ENCODE measurements at regions of chrX and their contacts with region 1.

Region 1: DNA sequence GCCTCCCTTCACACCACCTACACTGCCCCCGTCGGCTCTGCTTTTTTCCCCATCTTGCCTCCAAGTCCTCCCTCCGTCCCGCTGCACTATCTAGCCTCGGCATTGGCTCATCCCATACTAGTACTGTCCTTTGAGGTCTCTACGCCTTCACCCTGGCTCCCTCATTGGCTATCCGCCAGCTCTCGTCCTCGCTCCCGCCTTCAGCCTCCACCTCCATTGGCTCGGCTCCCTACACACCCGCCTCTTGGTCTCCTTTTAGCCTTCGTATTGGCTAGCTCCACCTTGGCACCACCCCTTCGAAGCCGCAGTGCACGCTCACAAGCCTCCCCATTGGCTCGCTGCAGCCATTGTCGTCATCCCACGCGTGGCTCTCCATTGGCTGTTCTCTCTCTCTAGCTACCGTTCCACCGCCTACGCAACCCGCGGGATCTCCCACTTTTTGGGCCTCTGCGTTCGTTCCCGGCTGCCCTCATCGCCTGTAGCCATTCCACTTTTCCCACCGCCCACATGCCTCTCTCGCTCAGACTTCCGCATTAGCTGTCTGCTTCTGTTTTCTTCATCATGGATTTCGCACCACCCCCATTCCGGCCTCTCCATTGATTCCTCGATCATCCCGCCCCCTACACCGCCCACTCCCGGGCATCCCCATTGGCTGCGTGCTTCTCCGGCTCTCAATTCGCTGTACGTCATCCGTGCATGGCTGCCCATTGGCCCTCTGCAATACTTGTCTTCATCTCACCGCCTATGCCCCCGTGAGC is 404 bp upstream of the PPP1R3F start:
- DNase-seq: peak; percentile 72 to 97 (median 94)
- ATAC-seq: peak; percentile 89
- H3K4me3 ChIP-seq: peak overlapping the region; percentile 96
- H3K4me3 Mint-ChIP-seq: peak overlapping the region; percentile 91 to 100 (median 96)
- H3K27ac ChIP-seq: peak overlapping the region; percentile 99
- H3K27ac Mint-ChIP-seq: peak overlapping the region; percentile 99 to 100 (median 99)
- H3K4me1 ChIP-seq: peaks cover 30 to 34% of the 10 kb centered on the region in 2 donors
- H3K4me1 Mint-ChIP-seq: peaks cover 17 to 51% (median 42%) of the 10 kb centered on the region in 7 donors
- H3K27me3 ChIP-seq: no peaks in the 10 kb centered on the region
- H3K27me3 Mint-ChIP-seq: no peaks in the 10 kb centered on the region

Region 2: DNA sequence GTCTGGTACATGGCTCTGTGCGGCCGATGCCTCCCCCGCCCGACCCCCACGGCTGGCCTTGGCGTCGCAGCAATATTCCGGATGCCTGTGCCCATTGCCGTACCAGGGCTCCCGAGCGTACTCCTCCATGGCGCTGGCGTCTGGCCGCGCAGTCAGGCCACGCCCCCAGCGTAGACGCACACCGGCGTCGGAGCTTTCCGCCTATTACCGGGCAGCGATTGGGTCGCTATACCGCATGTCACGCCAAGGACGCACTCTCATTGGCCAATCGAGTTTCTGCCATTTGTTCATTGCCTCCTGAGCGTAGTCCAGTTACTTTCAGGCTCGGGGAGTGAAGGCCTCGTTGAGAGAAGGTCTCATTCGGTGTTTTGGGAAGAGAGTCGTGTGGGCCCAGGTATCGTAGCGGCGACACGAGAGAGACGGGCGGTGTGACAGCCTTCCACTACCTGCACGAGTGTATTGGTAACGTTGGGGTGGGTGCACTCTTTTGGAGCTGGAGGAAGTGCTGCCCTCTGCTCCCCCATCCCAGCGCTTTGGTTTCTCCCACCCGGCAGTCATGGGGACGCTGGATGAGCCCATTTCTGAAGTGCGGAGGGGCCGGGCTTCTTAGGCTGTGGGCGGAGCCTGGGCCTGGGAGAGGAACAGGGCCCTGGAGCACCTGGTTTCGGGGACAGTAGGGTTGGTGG is 371.4 kb before region 1 on chrX and contains the starts of genes PQBP1 and TIMM17B:
- CTCF ChIA-PET with region 1: no interaction called
- POLR2A ChIA-PET with region 1: no interaction called
- intact Hi-C with region 1: loop called (anchors 5 to 10 kb)
- DNase-seq: peak; percentile 71 to 93 (median 89)
- ATAC-seq: peak; percentile 92
- H3K4me3 ChIP-seq: peak within 1 kb of the TSS; percentile 91
- H3K4me3 Mint-ChIP-seq: peak within 1 kb of the TSS; percentile 83 to 100 (median 91)
- H3K27ac ChIP-seq: peak within 1 kb of the TSS; percentile 98
- H3K27ac Mint-ChIP-seq: peak within 1 kb of the TSS; percentile 89 to 98 (median 94)
- H3K4me1 ChIP-seq: peaks cover 12 to 16% of the 10 kb centered on the region in 2 donors
- H3K4me1 Mint-ChIP-seq: peaks cover 6 to 42% (median 24%) of the 10 kb centered on the region in 7 donors
- H3K27me3 ChIP-seq: no peaks in the 10 kb centered on the region
- H3K27me3 Mint-ChIP-seq: no peaks in the 10 kb centered on the region
- total RNA-seq, gene PQBP1: 64.1 to 89.5 (median 74.6) TPM
- total RNA-seq, gene TIMM17B: 41.1 to 46.6 (median 44.2) TPM

Region 3: GRCh38 chrX:49073601-49074571 is 195.3 kb before region 1 on chrX and contains the start of gene PRAF2:
- CTCF ChIA-PET with region 1: no interaction called
- POLR2A ChIA-PET with region 1: no interaction called
- intact Hi-C with region 1: loop called in 1 of 2 experiments (anchors 10 kb)
- DNase-seq: peak; percentile 60 to 90 (median 86)
- ATAC-seq: peak; percentile 99
- H3K4me3 ChIP-seq: peak within 1 kb of the TSS; percentile 61
- H3K4me3 Mint-ChIP-seq: peak within 1 kb of the TSS; percentile 73 to 88 (median 83)
- H3K27ac ChIP-seq: peak within 1 kb of the TSS; percentile 78
- H3K27ac Mint-ChIP-seq: peak within 1 kb of the TSS; percentile 66 to 91 (median 86)
- H3K4me1 ChIP-seq: peaks cover 4 to 10% of the 10 kb centered on the region in 2 donors
- H3K4me1 Mint-ChIP-seq: peaks cover 9 to 25% (median 16%) of the 10 kb centered on the region in 7 donors
- H3K27me3 ChIP-seq: no peaks in the 10 kb centered on the region
- H3K27me3 Mint-ChIP-seq: no peaks in the 10 kb centered on the region
- total RNA-seq, gene PRAF2: 15.9 to 28.3 (median 20.4) TPM

Region 4: GRCh38 chrX:49163555-49164419 is 105.4 kb before region 1 on chrX:
- CTCF ChIA-PET with region 1: no interaction called
- POLR2A ChIA-PET with region 1: interaction called, 3 read pairs
- intact Hi-C with region 1: loop called in 1 of 2 experiments (anchors 1 kb)
- DNase-seq: peak; percentile 71 to 84 (median 80)
- ATAC-seq: peak; percentile 74
- H3K4me3 ChIP-seq: peak overlapping the region; percentile 50
- H3K4me3 Mint-ChIP-seq: peak overlapping the region; percentile 72 to 84 (median 81)
- H3K27ac ChIP-seq: peak overlapping the region; percentile 74
- H3K27ac Mint-ChIP-seq: peak overlapping the region; percentile 79 to 97 (median 92)
- H3K4me1 ChIP-seq: peaks cover 14 to 16% of the 10 kb centered on the region in 2 donors
- H3K4me1 Mint-ChIP-seq: peaks cover 13 to 33% (median 26%) of the 10 kb centered on the region in 7 donors
- H3K27me3 ChIP-seq: no peaks in the 10 kb centered on the region
- H3K27me3 Mint-ChIP-seq: peaks cover 0 to under 1% (median 0%) of the 10 kb centered on the region in 5 donors

Region 5: GRCh38 chrX:49230469-49231232 is 38.5 kb before region 1 on chrX:
- CTCF ChIA-PET with region 1: no interaction called
- POLR2A ChIA-PET with region 1: interaction called, 9 read pairs
- intact Hi-C with region 1: loop called (anchors 1 kb)
- DNase-seq: peak; percentile 19 to 63 (median 44)
- ATAC-seq: peak; percentile 78
- H3K4me3 ChIP-seq: peak overlapping the region; percentile 28
- H3K4me3 Mint-ChIP-seq: peak overlapping the region; percentile 76 to 87 (median 80)
- H3K27ac ChIP-seq: peak overlapping the region; percentile 71
- H3K27ac Mint-ChIP-seq: peak overlapping the region; percentile 67 to 94 (median 88)
- H3K4me1 ChIP-seq: peaks cover 0 to 4% of the 10 kb centered on the region in 2 donors
- H3K4me1 Mint-ChIP-seq: peaks cover 6 to 26% (median 21%) of the 10 kb centered on the region in 7 donors
- H3K27me3 ChIP-seq: no peaks in the 10 kb centered on the region
- H3K27me3 Mint-ChIP-seq: no peaks in the 10 kb centered on the region

Region 6: DNA sequence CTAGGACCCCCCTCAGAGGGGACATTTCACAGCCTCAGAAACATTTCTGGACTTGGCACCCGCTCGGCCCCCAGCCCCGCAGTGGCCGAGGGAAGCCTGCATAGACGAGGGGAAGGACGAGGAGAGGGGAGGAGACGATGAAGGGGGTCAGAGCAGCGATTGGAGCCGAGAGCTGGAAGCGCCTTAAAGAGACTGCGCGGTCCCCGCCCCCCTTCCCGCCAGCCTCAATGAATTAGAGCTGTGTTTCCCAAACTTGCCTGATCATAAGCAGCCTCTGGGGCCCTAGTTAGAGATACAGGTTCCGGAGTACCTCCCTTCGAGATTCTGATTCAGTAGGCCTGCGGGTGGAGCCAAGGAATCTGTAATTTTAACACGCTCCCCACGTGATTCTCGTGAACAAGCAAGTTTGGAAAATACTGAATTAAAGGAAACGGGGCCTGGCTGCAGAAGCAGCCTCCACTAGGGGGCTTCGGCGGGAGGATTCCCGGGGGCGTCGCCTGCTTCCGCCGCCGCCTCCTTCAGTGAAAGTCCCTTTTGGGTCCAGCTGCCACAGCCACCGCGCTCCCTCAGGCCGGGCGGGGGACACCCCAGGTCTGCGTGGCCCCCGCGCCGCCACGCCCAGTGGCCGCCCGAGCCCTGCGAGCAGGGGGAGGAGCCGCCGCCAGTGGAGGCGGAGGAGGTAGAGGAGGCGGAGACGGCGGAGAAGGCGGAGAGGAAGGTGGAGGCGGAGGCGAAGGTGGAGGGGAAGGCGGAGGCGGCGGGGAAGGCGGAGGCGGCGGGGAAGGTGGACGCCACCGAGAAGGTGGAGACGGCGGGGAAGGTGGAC is 609.9 kb after region 1 on chrX and contains the start of gene USP27X:
- CTCF ChIA-PET with region 1: no interaction called
- POLR2A ChIA-PET with region 1: no interaction called
- intact Hi-C with region 1: loop called (anchors 1 to 5 kb)
- DNase-seq: peak; percentile 60 to 82 (median 71)
- ATAC-seq: peak; percentile 96
- H3K4me3 ChIP-seq: peak within 1 kb of the TSS; percentile 60
- H3K4me3 Mint-ChIP-seq: peak within 1 kb of the TSS; percentile 81 to 91 (median 86)
- H3K27ac ChIP-seq: peak within 1 kb of the TSS; percentile 65
- H3K27ac Mint-ChIP-seq: peak within 1 kb of the TSS; percentile 63 to 89 (median 74)
- H3K4me1 ChIP-seq: peaks cover 10 to 19% of the 10 kb centered on the region in 2 donors
- H3K4me1 Mint-ChIP-seq: peaks cover 6 to 47% (median 36%) of the 10 kb centered on the region in 7 donors
- H3K27me3 ChIP-seq: no peaks in the 10 kb centered on the region
- H3K27me3 Mint-ChIP-seq: no peaks in the 10 kb centered on the region
- total RNA-seq, gene USP27X: 1.8 to 9.4 (median 3.8) TPM

Measured in naive thymus-derived CD4-positive, alpha-beta T cell (primary cell).